ENCODE measurements at regions of chr5 and their contacts with region 1.

Region 1: DNA sequence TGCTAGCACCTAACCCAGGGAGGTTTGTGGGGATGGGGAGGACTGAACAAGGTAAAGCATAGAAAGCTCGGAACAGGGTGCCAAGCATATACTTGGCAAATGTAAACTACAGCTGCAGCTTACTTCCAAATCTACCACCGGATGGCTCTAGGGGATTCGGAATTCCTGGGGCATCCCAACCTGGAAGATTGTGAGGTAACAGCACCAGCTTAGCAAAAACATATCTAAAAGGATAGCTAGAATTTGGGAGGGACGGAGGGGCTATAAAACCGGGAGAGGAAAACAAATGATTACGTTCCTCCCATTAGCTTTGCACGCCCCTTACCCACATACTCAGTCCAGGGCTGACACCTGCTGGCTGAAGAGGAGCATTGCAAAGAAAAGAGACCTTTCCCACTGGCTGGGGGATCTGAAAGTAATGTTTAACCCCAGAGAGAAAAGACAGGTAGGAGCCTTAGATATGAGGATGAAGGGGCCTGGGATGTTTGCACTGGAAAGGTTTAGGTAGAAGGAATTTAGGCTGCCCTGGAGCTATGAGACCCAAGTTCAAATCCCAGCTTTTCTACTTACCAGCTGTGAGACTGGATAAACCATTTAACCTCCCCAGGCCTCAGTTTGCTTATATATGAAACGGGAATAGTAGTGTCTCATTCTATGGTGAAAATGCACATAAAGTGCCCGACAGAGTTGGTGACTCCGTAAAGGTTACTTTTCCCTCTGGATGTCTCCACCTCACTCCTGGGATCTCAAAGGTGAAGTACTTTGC is 73.6 kb downstream of the FAM114A2 start:
- DNase-seq: peak; percentile 89
- H3K27ac ChIP-seq: no peak overlapping the region
- CTCF ChIP-seq: peak; percentile 93

Region 2: DNA sequence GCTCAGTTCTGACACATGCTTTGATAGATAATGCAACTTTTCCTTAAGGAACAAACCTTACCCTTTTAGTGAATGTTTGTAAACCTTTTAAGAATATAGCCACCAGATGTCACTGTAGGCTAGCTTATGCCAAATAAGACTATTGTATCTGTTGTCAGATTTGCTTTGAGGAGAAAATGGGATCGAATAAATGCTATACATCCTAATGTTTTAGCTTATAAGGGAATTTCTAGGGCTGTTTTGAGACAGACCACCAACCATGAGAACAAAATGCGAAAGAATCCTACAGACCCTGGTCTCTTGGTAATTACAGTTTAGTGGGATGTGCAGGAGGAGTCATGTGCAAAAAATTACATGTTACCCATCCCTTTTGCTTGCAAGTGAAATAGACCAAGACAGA is 1432.3 kb before region 1 on chr5:
- CTCF ChIA-PET with region 1: interaction called, 23 read pairs
- POLR2A ChIA-PET with region 1: no interaction called
- DNase-seq: peak; percentile 67
- H3K27ac ChIP-seq: no peak overlapping the region
- CTCF ChIP-seq: peak; percentile 50

Region 3: GRCh38 chr5:152560512-152561137 is 1404.4 kb before region 1 on chr5:
- CTCF ChIA-PET with region 1: interaction called, 13 read pairs
- POLR2A ChIA-PET with region 1: no interaction called
- DNase-seq: peak; percentile 64
- H3K27ac ChIP-seq: no peak overlapping the region
- CTCF ChIP-seq: peak; percentile 72

Region 4: GRCh38 chr5:153496835-153497234 is 468.2 kb before region 1 on chr5:
- CTCF ChIA-PET with region 1: interaction called, 20 read pairs
- POLR2A ChIA-PET with region 1: no interaction called
- DNase-seq: peak; percentile 67
- H3K27ac ChIP-seq: no peak overlapping the region
- CTCF ChIP-seq: peak; percentile 77

Region 5: DNA sequence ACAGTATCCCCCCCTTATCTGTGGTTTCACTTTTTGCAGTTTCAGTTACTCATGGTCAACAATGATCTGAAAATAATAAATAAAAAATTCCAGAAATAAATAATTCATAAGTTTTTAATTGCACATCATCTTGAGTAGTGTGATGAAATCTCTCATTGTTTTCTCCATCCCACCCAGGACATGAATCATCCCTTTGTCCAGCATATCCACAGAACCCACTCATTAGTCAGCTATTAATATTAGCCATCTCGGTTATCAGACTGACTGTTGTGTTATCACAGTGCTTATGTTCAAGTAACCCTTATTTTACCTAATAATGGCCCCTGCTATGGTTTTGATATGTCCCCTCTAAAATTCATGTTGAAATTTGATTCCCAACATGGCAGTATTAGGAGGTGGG is 32.9 kb after region 1 on chr5:
- CTCF ChIA-PET with region 1: no interaction called
- POLR2A ChIA-PET with region 1: no interaction called
- DNase-seq: no peak
- H3K27ac ChIP-seq: no peak overlapping the region
- CTCF ChIP-seq: no peak

Region 6: GRCh38 chr5:154868702-154869101 is 903.6 kb after region 1 on chr5:
- CTCF ChIA-PET with region 1: no interaction called
- POLR2A ChIA-PET with region 1: interaction called, 12 read pairs
- DNase-seq: no peak
- H3K27ac ChIP-seq: no peak overlapping the region
- CTCF ChIP-seq: no peak

Measured in RWPE1 (cell line).